SK-N-SH (cell line): ENCODE measurements at regions of chr9 and their contacts with region 1.

Region 1: GRCh38 chr9:121698627-121699570 is 47.5 kb downstream of the DAB2IP start:
- DNase-seq: peak; percentile 96
- H3K4me3 ChIP-seq: peak overlapping the region; percentile 75 to 76
- H3K27ac ChIP-seq: peak overlapping the region; percentile 33 to 87; a peak in 3 of 4 replicates
- H3K4me1 ChIP-seq: peaks cover 0 to 51% of the 10 kb centered on the region in 2 experiments; a peak in 1 of 4 replicates
- H3K27me3 ChIP-seq: no peaks in the 10 kb centered on the region
- CTCF ChIP-seq: no peak
- EP300 ChIP-seq: no peak
- RAD21 ChIP-seq: no peak

Region 2: GRCh38 chr9:121621113-121621449 is 77.8 kb before region 1 on chr9:
- CTCF ChIA-PET with region 1: interaction called, 18 read pairs
- POLR2A ChIA-PET with region 1: no interaction called
- DNase-seq: peak; percentile 79
- H3K4me3 ChIP-seq: no peak overlapping the region; a peak in 1 of 4 replicates
- H3K27ac ChIP-seq: no peak overlapping the region
- H3K4me1 ChIP-seq: peaks cover 0 to 20% of the 10 kb centered on the region in 2 experiments; a peak in 1 of 4 replicates
- H3K27me3 ChIP-seq: no peaks in the 10 kb centered on the region
- CTCF ChIP-seq: peak; percentile 64
- EP300 ChIP-seq: no peak
- RAD21 ChIP-seq: peak; percentile 69

Region 3: DNA sequence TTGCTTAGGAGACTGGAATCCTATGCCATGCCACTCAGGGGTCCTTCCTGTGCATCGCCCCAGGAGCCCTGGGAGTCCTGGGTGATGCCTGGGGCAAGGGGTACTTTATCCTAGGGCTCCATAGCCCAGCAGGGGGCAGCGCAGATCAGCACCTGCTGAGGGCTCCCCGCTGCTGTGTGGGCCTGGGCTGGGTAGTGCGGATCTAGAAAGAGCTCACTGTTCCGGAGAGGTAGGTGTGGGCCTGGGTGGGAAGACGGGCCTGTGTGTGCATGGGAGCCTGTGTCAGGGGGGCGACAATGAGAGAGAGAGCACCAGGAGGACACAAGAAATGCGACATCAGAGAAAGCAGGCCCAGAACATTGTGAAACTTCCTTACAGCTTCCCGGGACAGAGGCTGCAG is 58.8 kb before region 1 on chr9:
- CTCF ChIA-PET with region 1: interaction called, 150 read pairs
- POLR2A ChIA-PET with region 1: interaction called, 3 read pairs
- DNase-seq: peak; percentile 75
- H3K4me3 ChIP-seq: no peak overlapping the region
- H3K27ac ChIP-seq: no peak overlapping the region; a peak in 1 of 4 replicates
- H3K4me1 ChIP-seq: peaks cover 8 to 48% of the 10 kb centered on the region in 2 experiments; a peak in 3 of 4 replicates
- H3K27me3 ChIP-seq: no peaks in the 10 kb centered on the region
- CTCF ChIP-seq: peak; percentile 64
- EP300 ChIP-seq: no peak
- RAD21 ChIP-seq: peak; percentile 66

Region 4: GRCh38 chr9:121650217-121651007 is 48.5 kb before region 1 on chr9:
- CTCF ChIA-PET with region 1: interaction called, 12 read pairs
- POLR2A ChIA-PET with region 1: interaction called, 3 read pairs
- DNase-seq: peak; percentile 91
- H3K4me3 ChIP-seq: no peak overlapping the region
- H3K27ac ChIP-seq: peak overlapping the region in 1 of 2 experiments; percentile 94; a peak in 3 of 4 replicates
- H3K4me1 ChIP-seq: peaks cover 12 to 74% of the 10 kb centered on the region in 2 experiments
- H3K27me3 ChIP-seq: no peaks in the 10 kb centered on the region
- CTCF ChIP-seq: no peak
- EP300 ChIP-seq: peak; percentile 40 to 53; a peak in 2 of 4 replicates
- RAD21 ChIP-seq: peak; percentile 23; the same call in 1 of the 2 replicates

Region 5: GRCh38 chr9:121708768-121709488 is 10.0 kb after region 1 on chr9:
- CTCF ChIA-PET with region 1: interaction called, 16 read pairs
- POLR2A ChIA-PET with region 1: interaction called, 3 read pairs
- DNase-seq: peak; percentile 59
- H3K4me3 ChIP-seq: no peak overlapping the region
- H3K27ac ChIP-seq: peak overlapping the region in 1 of 2 experiments; percentile 30; a peak in 1 of 4 replicates
- H3K4me1 ChIP-seq: peaks cover 7 to 82% of the 10 kb centered on the region in 2 experiments; a peak in 2 of 4 replicates
- H3K27me3 ChIP-seq: no peaks in the 10 kb centered on the region
- CTCF ChIP-seq: no peak
- EP300 ChIP-seq: no peak
- RAD21 ChIP-seq: no peak

Region 6: DNA sequence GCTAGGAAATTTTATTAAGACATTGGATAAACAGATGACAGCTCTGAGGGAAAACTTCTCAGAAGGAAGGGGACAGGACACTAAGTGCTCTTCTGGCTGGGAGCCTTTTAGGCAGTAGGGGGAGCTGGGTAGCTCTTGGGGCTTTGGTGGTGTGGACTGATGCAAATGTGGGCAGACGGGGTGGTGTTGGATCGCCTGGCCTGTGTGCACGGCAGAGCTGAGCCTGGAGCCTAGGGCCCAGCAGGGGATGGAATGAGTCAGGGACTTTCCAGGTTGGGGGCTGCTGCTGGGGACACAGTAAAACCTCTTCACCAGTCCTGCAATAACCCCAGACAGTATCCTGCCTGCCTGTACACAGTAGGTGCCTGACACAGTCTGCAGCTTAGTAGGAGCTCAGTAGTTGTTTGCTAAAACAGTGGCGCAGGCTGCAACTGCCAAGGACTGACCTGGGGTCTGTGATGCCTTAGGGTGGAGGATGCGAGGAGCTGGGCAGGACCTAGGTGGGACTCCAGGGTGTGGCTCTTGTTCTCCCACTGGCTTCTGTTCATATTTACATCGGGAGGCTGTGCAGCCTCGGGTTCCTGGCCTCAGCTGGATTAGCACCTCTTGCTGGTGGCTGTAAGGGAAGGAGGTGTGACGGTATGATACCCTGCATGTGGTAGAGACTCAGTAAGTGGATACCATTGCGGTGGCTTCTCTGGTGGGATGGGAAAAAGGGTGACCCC is 36.3 kb after region 1 on chr9:
- CTCF ChIA-PET with region 1: interaction called, 10 read pairs
- POLR2A ChIA-PET with region 1: no interaction called
- DNase-seq: no peak
- H3K4me3 ChIP-seq: no peak overlapping the region
- H3K27ac ChIP-seq: no peak overlapping the region
- H3K4me1 ChIP-seq: peaks cover 15 to 77% of the 10 kb centered on the region in 2 experiments; a peak in 3 of 4 replicates
- H3K27me3 ChIP-seq: no peaks in the 10 kb centered on the region
- CTCF ChIP-seq: peak; percentile 54
- EP300 ChIP-seq: no peak
- RAD21 ChIP-seq: 0 out of 2 replicates have a peak, but pooled peaks have one; percentile 35

Region 7: GRCh38 chr9:121770415-121771273 is 71.7 kb after region 1 on chr9:
- CTCF ChIA-PET with region 1: no interaction called
- POLR2A ChIA-PET with region 1: no interaction called
- DNase-seq: no peak
- H3K4me3 ChIP-seq: no peak overlapping the region
- H3K27ac ChIP-seq: peak overlapping the region in 1 of 2 experiments; percentile 81; a peak in 2 of 4 replicates
- H3K4me1 ChIP-seq: peaks cover 0 to 31% of the 10 kb centered on the region in 2 experiments; a peak in 3 of 4 replicates
- H3K27me3 ChIP-seq: no peaks in the 10 kb centered on the region
- CTCF ChIP-seq: no peak
- EP300 ChIP-seq: no peak
- RAD21 ChIP-seq: no peak

Region 8: GRCh38 chr9:122206118-122207046 is 507.5 kb after region 1 on chr9:
- CTCF ChIA-PET with region 1: no interaction called
- POLR2A ChIA-PET with region 1: no interaction called
- DNase-seq: no peak
- H3K4me3 ChIP-seq: no peak overlapping the region
- H3K27ac ChIP-seq: no peak overlapping the region
- H3K4me1 ChIP-seq: peaks cover 0 to 10% of the 10 kb centered on the region in 2 experiments; a peak in 1 of 4 replicates
- H3K27me3 ChIP-seq: peaks cover 38% of the 10 kb centered on the region
- CTCF ChIP-seq: no peak
- EP300 ChIP-seq: no peak
- RAD21 ChIP-seq: no peak